ENCODE measurements at regions of chr2 and their contacts with region 1.

Region 1: DNA sequence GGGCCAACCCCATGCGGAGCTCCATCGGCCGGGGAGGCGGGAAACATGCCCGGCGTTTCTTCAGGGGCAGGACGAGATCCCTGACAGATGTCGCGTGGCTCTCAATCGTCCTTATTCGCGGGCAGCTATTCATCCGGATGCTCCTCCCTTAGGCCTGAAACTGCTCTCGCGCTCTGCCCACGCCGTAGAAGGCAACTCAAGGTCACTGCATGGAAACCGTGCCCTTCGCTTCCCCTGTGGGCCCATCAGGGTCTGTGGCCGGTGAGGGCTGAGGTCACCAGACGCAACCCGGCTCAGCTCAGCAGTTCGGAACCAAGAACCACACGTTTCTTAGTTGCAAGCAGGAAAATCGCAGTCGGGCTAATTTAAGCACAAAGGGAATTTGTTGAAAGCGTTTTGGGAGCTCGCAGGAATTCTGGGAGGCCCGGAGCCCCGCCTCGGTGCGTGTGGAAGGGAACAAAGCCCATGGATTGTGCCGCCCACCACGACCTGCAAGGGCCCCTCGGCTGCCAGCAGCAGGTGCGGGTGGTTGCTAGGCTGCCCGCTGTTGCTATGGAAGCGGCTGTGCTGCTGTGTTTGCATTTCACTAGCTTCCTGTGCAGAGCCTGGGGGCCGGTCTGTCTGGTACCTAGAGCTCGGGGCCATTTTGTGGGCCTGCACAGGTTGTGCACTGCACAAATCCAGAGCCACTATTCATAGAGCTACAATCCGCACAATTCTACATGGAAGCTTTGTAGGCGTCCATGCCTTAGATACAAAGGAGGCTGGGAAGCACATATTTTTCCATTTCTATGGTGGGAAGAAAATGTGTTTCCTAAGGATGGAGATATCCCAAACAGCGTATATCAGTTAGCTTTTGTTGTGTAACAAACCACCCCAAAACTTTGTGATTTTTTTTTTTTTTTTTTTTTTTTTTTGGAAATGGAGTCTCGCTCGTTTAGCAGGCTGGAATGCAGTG is 6.0 kb upstream of the ALLC start:
- DNase-seq: peak; percentile 64 to 82 (median 80)
- H3K4me3 ChIP-seq: peak overlapping the region in 1 of 2 donors; percentile 65
- H3K4me3 Mint-ChIP-seq: peak overlapping the region; percentile 87 to 95 (median 92)
- H3K27ac ChIP-seq: peak overlapping the region; percentile 27
- H3K27ac Mint-ChIP-seq: peak overlapping the region; percentile 87 to 100 (median 96)
- H3K4me1 ChIP-seq: peaks cover 13% of the 10 kb centered on the region
- H3K4me1 Mint-ChIP-seq: peaks cover 8 to 18% (median 13%) of the 10 kb centered on the region in 4 donors
- H3K27me3 ChIP-seq: no peaks in the 10 kb centered on the region
- H3K27me3 Mint-ChIP-seq: peaks cover 0 to 3% of the 10 kb centered on the region in 2 donors

Region 2: GRCh38 chr2:2116657-2117056 is 1535.3 kb before region 1 on chr2:
- CTCF ChIA-PET with region 1: interaction called, 12 read pairs
- POLR2A ChIA-PET with region 1: no interaction called
- intact Hi-C with region 1: no loop called
- DNase-seq: no peak
- H3K4me3 ChIP-seq: no peak overlapping the region
- H3K4me3 Mint-ChIP-seq: no peak overlapping the region
- H3K27ac ChIP-seq: no peak overlapping the region
- H3K27ac Mint-ChIP-seq: no peak overlapping the region
- H3K4me1 ChIP-seq: no peaks in the 10 kb centered on the region
- H3K4me1 Mint-ChIP-seq: peaks cover 0 to 4% (median 4%) of the 10 kb centered on the region in 4 donors
- H3K27me3 ChIP-seq: no peaks in the 10 kb centered on the region
- H3K27me3 Mint-ChIP-seq: peaks cover 0 to 1% of the 10 kb centered on the region in 2 donors

Region 3: DNA sequence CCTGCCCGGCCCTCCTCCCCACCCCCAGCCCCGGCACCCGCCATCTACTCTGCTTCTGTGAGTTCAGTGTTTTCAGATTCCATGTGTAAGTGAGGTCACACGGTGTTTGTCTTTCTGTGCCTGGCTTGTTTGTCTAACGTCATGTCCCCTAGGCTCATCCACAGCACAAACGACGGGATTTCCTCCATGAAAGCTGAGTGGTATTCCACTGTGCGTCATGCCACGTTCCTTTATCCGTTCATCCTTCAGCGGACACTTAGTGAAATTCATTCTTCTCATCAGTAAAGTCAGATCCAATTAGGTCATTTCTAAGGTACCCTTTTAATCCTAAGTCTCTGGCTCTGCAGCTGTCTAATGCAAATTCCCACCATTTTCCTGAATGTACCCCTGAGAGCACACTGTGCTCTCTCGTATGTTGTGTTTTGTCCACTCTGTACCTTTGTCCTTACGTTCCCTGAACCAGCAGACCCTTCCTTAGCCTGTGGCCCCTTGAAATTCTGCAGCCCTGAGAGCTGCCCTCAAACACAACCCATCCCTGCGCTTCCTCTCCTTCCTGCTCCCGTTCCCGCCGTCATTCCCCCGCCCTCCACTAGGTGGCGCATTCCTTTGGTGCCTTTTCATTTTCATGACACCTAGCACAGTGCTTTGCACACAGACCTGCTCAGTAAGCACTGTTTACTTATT is 228.3 kb before region 1 on chr2:
- CTCF ChIA-PET with region 1: interaction called, 109 read pairs
- POLR2A ChIA-PET with region 1: interaction called, 12 read pairs
- intact Hi-C with region 1: loop called (anchors 1 kb)
- DNase-seq: peak; percentile 50 to 63 (median 57)
- H3K4me3 ChIP-seq: no peak overlapping the region
- H3K4me3 Mint-ChIP-seq: no peak overlapping the region
- H3K27ac ChIP-seq: no peak overlapping the region
- H3K27ac Mint-ChIP-seq: peak overlapping the region in 6 of 7 donors; percentile 9 to 90 (median 34)
- H3K4me1 ChIP-seq: no peaks in the 10 kb centered on the region
- H3K4me1 Mint-ChIP-seq: peaks cover 3 to 6% (median 5%) of the 10 kb centered on the region in 4 donors
- H3K27me3 ChIP-seq: no peaks in the 10 kb centered on the region
- H3K27me3 Mint-ChIP-seq: no peaks in the 10 kb centered on the region

Region 4: GRCh38 chr2:3558205-3559014 is 93.6 kb before region 1 on chr2 and contains the start of gene RNASEH1:
- CTCF ChIA-PET with region 1: interaction called, 4 read pairs
- POLR2A ChIA-PET with region 1: interaction called, 19 read pairs
- intact Hi-C with region 1: loop called (anchors 1 kb)
- DNase-seq: peak; percentile 96 to 98 (median 96)
- H3K4me3 ChIP-seq: peak within 1 kb of the TSS; percentile 18 to 87
- H3K4me3 Mint-ChIP-seq: peak within 1 kb of the TSS; percentile 89 to 95 (median 91)
- H3K27ac ChIP-seq: peak within 1 kb of the TSS; percentile 90
- H3K27ac Mint-ChIP-seq: peak within 1 kb of the TSS; percentile 93 to 98 (median 97)
- H3K4me1 ChIP-seq: peaks cover 25% of the 10 kb centered on the region
- H3K4me1 Mint-ChIP-seq: peaks cover 4 to 34% (median 24%) of the 10 kb centered on the region in 4 donors
- H3K27me3 ChIP-seq: no peaks in the 10 kb centered on the region
- H3K27me3 Mint-ChIP-seq: no peaks in the 10 kb centered on the region
- total RNA-seq, gene RNASEH1: 22.0 to 24.0 TPM

Region 5: DNA sequence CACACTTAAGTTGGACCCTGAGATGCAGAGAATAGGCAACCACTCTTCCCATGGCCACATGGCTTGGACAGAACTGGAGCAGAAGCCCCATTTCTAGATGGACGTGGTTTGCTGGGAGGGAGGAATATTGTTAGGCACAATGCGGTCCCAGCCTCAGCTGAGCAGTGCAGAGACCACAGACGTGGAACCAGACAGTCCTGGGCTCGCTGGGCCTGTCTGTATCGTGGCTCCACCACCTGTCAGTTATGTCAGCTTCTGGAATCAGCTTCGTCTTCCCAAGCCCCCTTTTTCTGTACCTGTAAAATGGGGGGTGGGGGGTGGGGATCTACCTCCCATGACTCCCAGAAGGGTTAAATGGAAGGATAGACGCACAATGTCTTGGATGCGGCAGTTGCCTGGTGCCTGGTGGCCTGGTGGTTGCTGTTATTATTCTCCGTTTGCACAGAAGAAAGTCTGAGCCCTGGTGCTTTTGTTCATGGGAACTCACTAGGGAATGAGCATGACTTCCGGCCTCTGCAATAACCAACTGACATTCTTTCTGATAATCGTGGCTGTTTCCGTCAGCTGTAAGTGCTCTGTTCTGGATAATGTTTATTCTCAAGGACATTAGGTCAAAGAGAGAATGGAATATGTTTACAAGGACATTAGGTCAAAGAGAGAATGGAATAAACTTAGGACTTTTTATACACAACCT is 25.7 kb before region 1 on chr2:
- CTCF ChIA-PET with region 1: no interaction called
- POLR2A ChIA-PET with region 1: no interaction called
- intact Hi-C with region 1: no loop called
- DNase-seq: no peak
- H3K4me3 ChIP-seq: no peak overlapping the region
- H3K4me3 Mint-ChIP-seq: no peak overlapping the region
- H3K27ac ChIP-seq: no peak overlapping the region
- H3K27ac Mint-ChIP-seq: no peak overlapping the region
- H3K4me1 ChIP-seq: no peaks in the 10 kb centered on the region
- H3K4me1 Mint-ChIP-seq: no peaks in the 10 kb centered on the region
- H3K27me3 ChIP-seq: no peaks in the 10 kb centered on the region
- H3K27me3 Mint-ChIP-seq: peaks cover 2 to 4% of the 10 kb centered on the region in 2 donors

Region 6: GRCh38 chr2:3662239-3662638 is 10.3 kb after region 1 on chr2:
- CTCF ChIA-PET with region 1: interaction called, 10 read pairs
- POLR2A ChIA-PET with region 1: no interaction called
- intact Hi-C with region 1: no loop called
- DNase-seq: no peak
- H3K4me3 ChIP-seq: no peak overlapping the region
- H3K4me3 Mint-ChIP-seq: peak overlapping the region in 1 of 8 donors; percentile 1
- H3K27ac ChIP-seq: no peak overlapping the region
- H3K27ac Mint-ChIP-seq: peak overlapping the region in 2 of 7 donors; percentile 44 to 59
- H3K4me1 ChIP-seq: peaks cover 6% of the 10 kb centered on the region
- H3K4me1 Mint-ChIP-seq: peaks cover 3 to 20% (median 14%) of the 10 kb centered on the region in 4 donors
- H3K27me3 ChIP-seq: no peaks in the 10 kb centered on the region
- H3K27me3 Mint-ChIP-seq: no peaks in the 10 kb centered on the region

Measured in CD4-positive, alpha-beta memory T cell (primary cell).